ENCODE measurements at regions of chr10 and their contacts with region 1.

Region 1: DNA sequence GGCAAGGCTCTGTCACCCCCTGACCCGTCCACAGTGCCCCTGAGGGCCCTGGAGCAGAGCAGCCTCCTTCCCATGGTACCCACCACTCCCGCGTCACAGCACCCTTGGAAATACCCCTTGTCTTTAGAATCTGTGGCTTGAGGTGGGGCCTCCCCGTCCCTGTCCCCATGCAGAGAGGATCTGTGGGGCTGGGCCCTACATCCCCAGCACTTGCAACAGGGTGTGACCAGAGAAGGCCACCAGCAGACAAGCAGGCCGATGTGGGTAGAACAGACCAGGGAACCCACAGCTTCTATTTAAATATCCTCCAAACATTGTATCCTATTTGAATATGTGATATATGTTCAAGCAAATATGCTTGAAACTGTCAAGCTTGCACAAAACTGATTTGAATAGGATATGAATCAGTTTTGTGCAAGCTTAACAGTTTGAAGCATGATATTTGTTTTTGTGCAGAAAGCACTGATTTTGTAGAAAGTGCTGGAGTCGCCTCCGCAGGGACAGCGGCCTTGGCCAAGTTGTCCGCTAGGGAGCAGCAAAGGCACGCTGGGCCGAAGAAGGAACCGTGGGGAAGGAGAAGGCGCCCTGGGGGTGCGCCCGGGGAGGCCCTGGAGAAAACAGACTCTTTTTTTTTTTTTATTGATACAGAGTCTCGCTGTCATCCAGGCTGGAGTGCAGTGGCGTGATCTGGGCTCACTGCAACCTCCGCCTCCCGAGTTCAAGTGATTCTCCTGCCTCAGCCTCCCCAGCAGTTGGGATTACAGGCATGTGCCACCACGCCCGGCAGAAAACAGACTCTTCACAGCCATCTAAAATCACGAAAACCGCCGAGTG is 2.2 kb downstream of the CFAP46 start:
- DNase-seq: peak; percentile 63 to 96 (median 79)

Region 2: GRCh38 chr10:132735923-132736391 is 204.2 kb before region 1 on chr10:
- intact Hi-C with region 1: no loop called
- DNase-seq: peak; percentile 75 to 98 (median 82)

Region 3: GRCh38 chr10:132784867-132785725 is 155.1 kb before region 1 on chr10:
- intact Hi-C with region 1: no loop called
- DNase-seq: no peak

Region 4: GRCh38 chr10:133087679-133088178 is 147.6 kb after region 1 on chr10 and contains the start of gene ADGRA1:
- intact Hi-C with region 1: loop called (anchors 10 kb)
- DNase-seq: peak in 9 of 10 donors; percentile 66 to 96 (median 75)

Region 5: GRCh38 chr10:133124357-133125211 is 184.4 kb after region 1 on chr10:
- intact Hi-C with region 1: loop called (anchors 1 kb)
- DNase-seq: peak in 9 of 10 donors; percentile 11 to 90 (median 50)